ENCODE measurements at regions of chr9 and their contacts with region 1.

Region 1: DNA sequence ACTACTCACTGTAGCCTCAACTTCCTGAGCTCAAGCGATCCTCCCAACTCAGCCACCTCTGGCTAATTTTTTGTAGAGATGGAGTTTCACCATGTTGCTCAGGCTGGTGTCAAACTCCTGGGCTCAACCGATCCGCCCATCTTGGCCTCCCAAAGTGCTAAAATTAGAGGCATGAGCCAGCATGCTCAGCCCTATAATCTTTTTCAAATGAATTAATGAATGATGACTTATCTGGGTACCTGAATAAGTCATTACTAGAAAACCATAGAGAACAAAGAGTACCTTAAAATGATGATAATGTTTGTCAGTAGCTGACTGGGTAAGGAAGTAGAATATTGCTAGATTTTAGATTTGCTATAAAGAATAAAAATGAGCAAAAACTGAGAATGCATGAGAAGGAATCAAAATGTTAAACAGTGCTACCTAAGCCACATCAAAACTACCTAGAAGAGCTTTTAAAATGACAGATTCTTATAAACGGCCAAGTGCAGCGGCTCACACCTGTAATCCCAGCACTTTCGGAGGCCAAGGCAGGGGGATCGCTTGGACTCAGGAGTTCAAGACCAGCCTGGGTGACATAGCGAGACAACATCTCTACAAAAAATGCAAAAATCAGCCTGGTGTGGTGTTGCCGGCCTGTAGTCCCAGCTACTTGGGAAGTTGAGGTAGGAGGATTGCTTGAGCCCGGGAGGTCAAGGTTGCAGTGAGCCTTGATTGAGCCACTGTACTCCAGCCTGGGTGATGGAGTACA is 13.6 kb downstream of the FNBP1 start:
- DNase-seq: peak; percentile 77
- H3K4me3 Mint-ChIP-seq: peak overlapping the region; percentile 33
- H3K27ac Mint-ChIP-seq: peak overlapping the region; percentile 92
- H3K4me1 Mint-ChIP-seq: peaks cover 94% of the 10 kb centered on the region
- H3K27me3 Mint-ChIP-seq: no peaks in the 10 kb centered on the region

Region 2: GRCh38 chr9:130010151-130010988 is 19.0 kb before region 1 on chr9:
- CTCF ChIA-PET with region 1: interaction called, 8 read pairs
- POLR2A ChIA-PET with region 1: interaction called, 17 read pairs
- intact Hi-C with region 1: loop called (anchors 1 kb)
- DNase-seq: peak; percentile 71
- H3K4me3 Mint-ChIP-seq: peak overlapping the region; percentile 61
- H3K27ac Mint-ChIP-seq: peak overlapping the region; percentile 93
- H3K4me1 Mint-ChIP-seq: peaks cover 84% of the 10 kb centered on the region
- H3K27me3 Mint-ChIP-seq: no peaks in the 10 kb centered on the region

Region 3: DNA sequence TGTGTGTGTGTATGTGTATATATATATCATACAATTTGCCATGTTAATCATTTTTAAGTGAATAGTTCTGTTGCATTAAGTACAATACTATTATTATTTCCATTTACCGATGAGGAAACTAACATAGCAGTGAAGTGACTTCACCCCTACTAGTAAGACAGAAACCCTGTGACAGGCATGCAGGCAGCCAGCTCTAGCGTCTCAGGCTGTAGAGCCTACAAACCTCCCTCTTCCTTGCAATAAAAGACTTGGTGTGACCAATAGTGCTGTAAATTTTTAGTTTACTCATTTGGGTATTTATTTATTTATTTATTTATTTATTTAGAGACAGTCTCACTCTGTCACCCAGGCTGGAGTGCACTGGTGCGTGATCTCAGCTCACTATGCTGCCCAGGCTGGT is 11.1 kb before region 1 on chr9:
- CTCF ChIA-PET with region 1: interaction called, 7 read pairs
- POLR2A ChIA-PET with region 1: interaction called, 20 read pairs
- intact Hi-C with region 1: loop called (anchors 1 kb)
- DNase-seq: peak; percentile 58
- H3K4me3 Mint-ChIP-seq: no peak overlapping the region
- H3K27ac Mint-ChIP-seq: peak overlapping the region; percentile 76
- H3K4me1 Mint-ChIP-seq: peaks cover 77% of the 10 kb centered on the region
- H3K27me3 Mint-ChIP-seq: no peaks in the 10 kb centered on the region

Measured in activated CD4-positive, alpha-beta memory T cell treated with anti-CD3 and anti-CD28 coated beads for 36 hours (primary cell).